Head of caudate nucleus (tissue), 42 donors: ENCODE measurements at regions of chr4 and their contacts with region 1.

Region 1: GRCh38 chr4:103934178-103934789 is 214.5 kb upstream of the TACR3 start:
- DNase-seq: peak in 19 of 42 donors; percentile 9 to 79 (median 38)

Region 2: GRCh38 chr4:103204111-103204510 is 730.2 kb before region 1 on chr4:
- intact Hi-C with region 1: loop called (anchors 10 kb)
- DNase-seq: peak in 2 of 42 donors; percentile 6 to 26